ENCODE measurements at regions of chr4 and their contacts with region 1.

Region 1: DNA sequence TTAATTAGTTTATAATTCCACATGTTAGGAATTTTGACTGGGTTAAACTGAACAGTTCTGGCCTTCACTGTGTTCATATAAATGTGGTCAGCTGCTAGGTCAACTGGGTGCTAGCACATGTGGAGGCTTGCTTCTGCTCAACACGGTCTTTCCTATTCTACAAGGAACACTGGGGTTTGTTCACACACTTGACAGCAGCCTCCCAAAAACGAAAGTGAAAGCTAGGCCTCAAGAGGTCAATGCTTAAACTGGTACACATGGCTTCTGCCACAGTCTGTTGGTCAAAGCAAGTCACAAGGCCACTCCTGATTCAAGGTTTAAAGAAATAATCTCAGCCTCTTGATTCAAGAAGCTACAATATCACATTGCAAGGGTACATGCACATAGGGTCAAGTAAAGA is 126.5 kb downstream of the QDPR start:
- DNase-seq: peak; percentile 74
- H3K4me3 ChIP-seq: peak overlapping the region; percentile 12
- H3K27ac ChIP-seq: no peak overlapping the region
- H3K4me1 ChIP-seq: peaks cover 26% of the 10 kb centered on the region
- CTCF ChIP-seq: no peak

Region 2: GRCh38 chr4:17013382-17014006 is 371.9 kb before region 1 on chr4:
- CTCF ChIA-PET with region 1: no interaction called
- POLR2A ChIA-PET with region 1: no interaction called
- intact Hi-C with region 1: no loop called
- DNase-seq: no peak
- H3K4me3 ChIP-seq: no peak overlapping the region
- H3K27ac ChIP-seq: no peak overlapping the region
- H3K4me1 ChIP-seq: no peaks in the 10 kb centered on the region
- CTCF ChIP-seq: no peak

Region 3: GRCh38 chr4:17195461-17196275 is 189.7 kb before region 1 on chr4:
- CTCF ChIA-PET with region 1: no interaction called
- POLR2A ChIA-PET with region 1: no interaction called
- intact Hi-C with region 1: no loop called
- DNase-seq: no peak
- H3K4me3 ChIP-seq: no peak overlapping the region
- H3K27ac ChIP-seq: no peak overlapping the region
- H3K4me1 ChIP-seq: no peaks in the 10 kb centered on the region
- CTCF ChIP-seq: no peak

Region 4: DNA sequence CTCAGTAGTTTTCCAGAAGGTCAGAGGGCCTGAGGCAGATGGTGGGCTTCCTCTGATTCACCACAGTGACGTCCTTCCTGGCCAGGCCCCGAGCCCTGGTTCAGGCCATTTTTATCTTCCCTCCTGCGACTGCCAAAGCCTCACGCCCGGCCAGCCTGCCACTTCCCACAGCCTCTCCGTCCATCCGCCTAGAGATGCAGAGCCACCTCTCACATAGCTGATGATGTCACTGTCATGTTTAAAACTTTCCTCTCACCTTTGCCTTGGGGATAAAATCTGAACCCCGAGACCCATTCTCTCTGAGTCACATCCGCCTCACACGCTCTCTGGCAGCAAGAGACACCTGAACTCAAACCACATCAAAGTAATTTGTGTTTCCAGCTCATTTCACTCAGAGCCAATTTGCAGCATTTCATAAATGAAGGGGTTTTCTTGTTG is 48.9 kb before region 1 on chr4:
- CTCF ChIA-PET with region 1: no interaction called
- POLR2A ChIA-PET with region 1: interaction called, 3 read pairs
- intact Hi-C with region 1: loop called (anchors 2 kb)
- DNase-seq: peak; percentile 95
- H3K4me3 ChIP-seq: peak overlapping the region; percentile 50
- H3K27ac ChIP-seq: peak overlapping the region; percentile 92
- H3K4me1 ChIP-seq: peaks cover 81% of the 10 kb centered on the region
- CTCF ChIP-seq: no peak

Measured in OCI-LY7 (cell line).